Breast epithelium (tissue), 4 donors: ENCODE measurements at regions of chr4 and their contacts with region 1.

Region 1: GRCh38 chr4:43782391-43782790 is 666.2 kb downstream of the KCTD8 start:
- DNase-seq: no peak
- H3K4me3 ChIP-seq: no peak overlapping the region
- H3K27ac ChIP-seq: no peak overlapping the region
- H3K4me1 ChIP-seq: no peaks in the 10 kb centered on the region
- H3K27me3 ChIP-seq: no peaks in the 10 kb centered on the region
- CTCF ChIP-seq: no peak
- POLR2A ChIP-seq: no peak

Region 2: GRCh38 chr4:43564591-43564990 is 217.8 kb before region 1 on chr4:
- intact Hi-C with region 1: no loop called
- DNase-seq: no peak
- H3K4me3 ChIP-seq: no peak overlapping the region
- H3K27ac ChIP-seq: no peak overlapping the region
- H3K4me1 ChIP-seq: no peaks in the 10 kb centered on the region
- H3K27me3 ChIP-seq: no peaks in the 10 kb centered on the region
- CTCF ChIP-seq: no peak
- POLR2A ChIP-seq: no peak

Region 3: DNA sequence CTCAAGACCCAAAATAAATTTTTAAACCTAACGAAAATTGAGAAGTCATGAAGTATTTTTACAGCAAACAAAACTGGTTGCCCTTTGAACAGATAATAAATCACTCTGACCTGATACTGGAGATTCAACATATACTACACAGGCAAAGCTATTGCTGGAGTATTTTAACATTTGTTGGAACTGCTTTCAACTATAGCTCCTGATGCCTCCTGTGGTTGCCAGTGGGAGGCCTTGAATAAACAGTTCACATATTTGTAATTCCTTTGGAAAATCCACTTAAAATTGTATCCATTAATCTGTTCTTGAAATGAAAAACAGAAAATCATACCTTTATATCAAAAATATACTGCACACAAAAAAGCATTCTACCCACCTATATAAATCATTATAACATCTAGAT is 61.1 kb after region 1 on chr4:
- intact Hi-C with region 1: no loop called
- DNase-seq: no peak
- H3K4me3 ChIP-seq: no peak overlapping the region
- H3K27ac ChIP-seq: no peak overlapping the region
- H3K4me1 ChIP-seq: no peaks in the 10 kb centered on the region
- H3K27me3 ChIP-seq: no peaks in the 10 kb centered on the region
- CTCF ChIP-seq: no peak
- POLR2A ChIP-seq: no peak

Region 4: DNA sequence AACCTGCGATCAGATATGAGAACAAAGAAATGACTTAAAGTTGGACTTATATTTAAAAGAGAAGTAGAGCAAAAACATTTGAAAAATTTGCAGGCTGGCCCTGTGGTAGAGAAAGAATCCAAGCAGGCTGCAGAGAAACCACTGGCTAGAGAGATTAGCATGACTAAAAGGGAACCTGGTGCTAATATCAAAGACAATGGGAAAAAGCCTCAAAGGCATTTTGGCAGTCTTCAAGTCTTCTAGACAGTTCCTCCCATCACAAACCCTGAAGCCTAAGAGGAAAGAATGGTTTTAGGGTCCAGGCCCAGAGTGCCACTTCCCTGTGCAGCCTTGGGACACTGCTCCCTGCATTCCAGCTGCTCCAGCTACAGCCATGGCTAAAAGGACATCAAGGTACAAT is 632.9 kb after region 1 on chr4:
- intact Hi-C with region 1: loop called (anchors 5 kb)
- DNase-seq: no peak
- H3K4me3 ChIP-seq: no peak overlapping the region
- H3K27ac ChIP-seq: no peak overlapping the region
- H3K4me1 ChIP-seq: no peaks in the 10 kb centered on the region
- H3K27me3 ChIP-seq: no peaks in the 10 kb centered on the region
- CTCF ChIP-seq: no peak
- POLR2A ChIP-seq: no peak